ENCODE measurements at regions of chr10 and their contacts with region 1.

Region 1: GRCh38 chr10:70815504-70816219 is at the start of gene SGPL1:
- DNase-seq: no peak
- H3K4me3 ChIP-seq: peak within 1 kb of the TSS; percentile 55
- H3K27me3 ChIP-seq: peaks cover 7% of the 10 kb centered on the region
- CTCF ChIP-seq: peak; percentile 86
- polyA plus RNA-seq, gene SGPL1: 16.6 and 22.0 TPM in 2 replicates

Region 2: GRCh38 chr10:70549962-70550458 is 265.7 kb before region 1 on chr10:
- CTCF ChIA-PET with region 1: interaction called, 10 read pairs
- POLR2A ChIA-PET with region 1: no interaction called
- DNase-seq: no peak
- H3K4me3 ChIP-seq: no peak overlapping the region
- H3K27me3 ChIP-seq: no peaks in the 10 kb centered on the region
- CTCF ChIP-seq: peak; percentile 86

Region 3: GRCh38 chr10:70617798-70618568 is 197.7 kb before region 1 on chr10:
- CTCF ChIA-PET with region 1: no interaction called
- POLR2A ChIA-PET with region 1: no interaction called
- DNase-seq: no peak
- H3K4me3 ChIP-seq: no peak overlapping the region
- H3K27me3 ChIP-seq: peaks cover 7% of the 10 kb centered on the region; the same call in 1 of the 2 replicates
- CTCF ChIP-seq: no peak

Region 4: GRCh38 chr10:70880077-70880534 is 64.4 kb after region 1 on chr10:
- CTCF ChIA-PET with region 1: interaction called, 26 read pairs
- POLR2A ChIA-PET with region 1: no interaction called
- DNase-seq: no peak
- H3K4me3 ChIP-seq: no peak overlapping the region
- H3K27me3 ChIP-seq: no peaks in the 10 kb centered on the region
- CTCF ChIP-seq: peak; percentile 92

Region 5: GRCh38 chr10:70887804-70888800 is 72.4 kb after region 1 on chr10 and contains the start of gene PCBD1:
- CTCF ChIA-PET with region 1: interaction called, 10 read pairs
- POLR2A ChIA-PET with region 1: no interaction called
- DNase-seq: no peak
- H3K4me3 ChIP-seq: peak within 1 kb of the TSS; percentile 74
- H3K27me3 ChIP-seq: no peaks in the 10 kb centered on the region
- CTCF ChIP-seq: no peak
- polyA plus RNA-seq, gene PCBD1: 63.7 and 69.6 TPM in 2 replicates

Region 6: GRCh38 chr10:70906953-70907636 is 91.4 kb after region 1 on chr10:
- CTCF ChIA-PET with region 1: no interaction called
- POLR2A ChIA-PET with region 1: no interaction called
- DNase-seq: no peak
- H3K4me3 ChIP-seq: no peak overlapping the region
- H3K27me3 ChIP-seq: peaks cover 5% of the 10 kb centered on the region; the same call in 1 of the 2 replicates
- CTCF ChIP-seq: no peak